ENCODE measurements at regions of chr10 and their contacts with region 1.

Region 1: DNA sequence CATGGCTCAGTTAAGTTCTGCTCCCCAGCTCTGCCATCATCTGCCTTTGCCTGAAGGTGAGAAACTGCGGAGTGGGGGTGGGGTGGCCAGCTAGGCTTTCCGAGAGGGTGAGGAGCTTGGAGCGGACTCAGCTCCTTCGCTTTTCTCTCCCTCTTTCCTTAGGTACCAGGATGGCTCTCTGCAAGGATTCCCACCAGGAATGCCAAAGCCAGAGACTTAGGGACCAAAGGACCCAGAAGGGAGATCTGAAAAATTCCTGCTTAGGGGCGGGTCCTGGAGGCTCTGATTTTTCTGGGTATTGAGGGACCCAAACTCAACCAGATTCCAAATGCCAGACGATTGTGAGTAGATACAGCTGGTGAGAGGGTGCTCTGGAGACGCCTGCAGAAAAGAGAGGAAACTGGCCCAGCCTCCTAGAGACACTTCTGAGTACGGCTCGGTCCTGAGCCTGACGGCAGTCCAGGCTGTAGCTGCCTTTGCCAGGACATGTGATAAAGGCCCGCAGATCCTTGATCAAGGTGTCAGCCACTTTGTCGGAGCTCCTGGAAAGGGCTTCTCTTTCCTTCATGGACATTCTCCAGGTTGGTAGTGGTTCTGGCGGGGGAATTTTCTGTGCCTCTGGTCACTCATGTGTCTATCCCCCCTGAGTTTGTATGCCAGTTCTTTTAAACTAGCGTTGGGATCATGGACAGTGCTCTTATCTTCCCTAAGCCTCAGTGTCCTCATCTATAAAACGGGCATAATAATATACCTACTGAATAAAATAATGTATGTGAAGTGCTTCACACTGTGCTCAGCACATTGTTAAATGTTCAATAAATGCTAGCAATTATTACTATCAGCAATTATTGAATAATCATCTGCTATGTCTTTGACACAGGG is 42.5 kb upstream of the BTRC start:
- DNase-seq: peak; percentile 74
- ATAC-seq: peak; percentile 85
- H3K4me3 Mint-ChIP-seq: peak overlapping the region; percentile 52
- H3K27ac Mint-ChIP-seq: peak overlapping the region; percentile 50; the same call in 1 of the 2 replicates
- H3K4me1 Mint-ChIP-seq: peaks cover 23% of the 10 kb centered on the region
- H3K27me3 Mint-ChIP-seq: peaks cover 6% of the 10 kb centered on the region; the same call in 1 of the 2 replicates
- CTCF ChIP-seq: no peak

Region 2: GRCh38 chr10:101136007-101136707 is 175.3 kb before region 1 on chr10:
- CTCF ChIA-PET with region 1: no interaction called
- POLR2A ChIA-PET with region 1: no interaction called
- DNase-seq: no peak
- ATAC-seq: no peak
- H3K4me3 Mint-ChIP-seq: no peak overlapping the region
- H3K27ac Mint-ChIP-seq: no peak overlapping the region
- H3K4me1 Mint-ChIP-seq: peaks cover 46% of the 10 kb centered on the region
- H3K27me3 Mint-ChIP-seq: peaks cover 98% of the 10 kb centered on the region
- CTCF ChIP-seq: no peak

Region 3: GRCh38 chr10:101161494-101162299 is 149.7 kb before region 1 on chr10:
- CTCF ChIA-PET with region 1: no interaction called
- POLR2A ChIA-PET with region 1: no interaction called
- DNase-seq: peak; percentile 83
- ATAC-seq: peak; percentile 96
- H3K4me3 Mint-ChIP-seq: peak overlapping the region; percentile 55
- H3K27ac Mint-ChIP-seq: no peak overlapping the region; the same call in 1 of the 2 replicates
- H3K4me1 Mint-ChIP-seq: peaks cover 37% of the 10 kb centered on the region
- H3K27me3 Mint-ChIP-seq: peaks cover 52% of the 10 kb centered on the region
- CTCF ChIP-seq: peak; percentile 97

Region 4: DNA sequence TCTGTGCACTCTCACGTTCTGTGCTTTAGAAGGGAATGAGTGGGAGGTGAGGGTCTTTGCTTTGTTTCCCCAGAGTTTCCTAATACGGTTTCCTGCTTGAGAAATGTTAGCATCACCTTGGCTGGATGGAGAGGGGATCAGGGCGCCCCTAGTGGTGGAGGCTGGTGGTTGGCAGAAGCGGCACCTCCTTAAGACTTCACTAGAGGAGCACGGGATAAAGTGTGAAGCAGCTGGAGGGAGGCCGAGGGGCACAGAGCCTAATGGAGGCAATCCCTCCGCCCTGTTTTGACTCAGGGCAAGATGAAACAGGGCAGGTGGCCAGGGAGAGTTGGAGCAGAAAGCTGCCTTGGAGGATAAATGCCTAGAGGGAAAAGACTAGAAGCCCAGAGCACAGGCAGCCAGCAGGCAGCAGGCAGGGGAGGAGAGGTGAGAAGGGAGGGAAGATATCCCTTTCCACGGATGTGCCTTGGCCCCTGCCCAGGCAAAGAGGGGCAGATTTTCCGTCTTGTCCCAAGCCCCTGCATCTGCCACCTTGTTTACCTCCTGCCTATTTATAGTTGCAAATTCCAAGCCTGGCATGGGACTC is 13.4 kb before region 1 on chr10:
- CTCF ChIA-PET with region 1: interaction called, 24 read pairs
- POLR2A ChIA-PET with region 1: no interaction called
- DNase-seq: peak; percentile 92
- ATAC-seq: peak; percentile 81
- H3K4me3 Mint-ChIP-seq: no peak overlapping the region
- H3K27ac Mint-ChIP-seq: no peak overlapping the region
- H3K4me1 Mint-ChIP-seq: peaks cover 10% of the 10 kb centered on the region
- H3K27me3 Mint-ChIP-seq: peaks cover 69% of the 10 kb centered on the region
- CTCF ChIP-seq: peak; percentile 86

Region 5: GRCh38 chr10:101323495-101323894 is 12.1 kb after region 1 on chr10:
- CTCF ChIA-PET with region 1: interaction called, 12 read pairs
- POLR2A ChIA-PET with region 1: interaction called, 3 read pairs
- DNase-seq: peak; percentile 18
- ATAC-seq: peak; percentile 75
- H3K4me3 Mint-ChIP-seq: no peak overlapping the region
- H3K27ac Mint-ChIP-seq: no peak overlapping the region
- H3K4me1 Mint-ChIP-seq: peaks cover 21% of the 10 kb centered on the region
- H3K27me3 Mint-ChIP-seq: peaks cover 6% of the 10 kb centered on the region; the same call in 1 of the 2 replicates
- CTCF ChIP-seq: no peak